Breast epithelium (tissue), 4 donors: ENCODE measurements at regions of chr4 and their contacts with region 1.

Region 1: DNA sequence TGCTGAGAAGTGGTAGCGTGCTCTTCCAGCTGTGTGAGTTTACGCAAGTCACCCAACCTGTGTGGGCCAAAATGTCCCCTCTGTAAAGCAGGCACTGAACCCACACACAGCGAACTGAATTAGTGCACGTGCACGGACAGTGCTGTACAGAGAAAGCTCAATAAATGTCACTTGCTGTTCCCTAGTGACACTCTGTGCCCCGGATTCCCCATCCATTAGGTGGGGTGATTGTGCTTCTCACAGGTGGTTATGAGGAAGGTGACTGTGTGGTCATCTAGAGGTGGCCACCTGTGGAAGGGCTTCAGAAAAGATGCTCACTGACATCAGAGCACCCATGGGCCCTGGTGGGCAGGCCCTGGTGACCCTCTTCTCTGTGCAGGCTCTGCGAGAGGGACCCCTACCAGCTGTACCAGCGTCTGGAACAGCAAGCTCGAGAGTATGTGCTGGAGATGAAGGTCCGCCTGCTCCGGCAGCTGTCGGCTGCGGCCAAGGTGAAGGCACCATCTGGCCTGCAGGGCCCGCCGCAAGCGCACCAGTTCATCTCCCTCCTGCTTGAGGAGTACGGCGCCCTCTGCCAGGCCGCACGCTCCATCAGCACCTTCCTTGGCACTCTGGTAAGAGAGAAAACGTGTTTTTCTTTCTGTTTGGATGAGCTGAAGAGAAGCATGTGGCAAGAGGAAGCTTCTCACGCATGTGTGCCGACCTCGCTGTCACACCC is 94.3 kb downstream of the FAM193A start:
- DNase-seq: peak in 1 of 2 donors; percentile 33
- H3K4me3 ChIP-seq: no peak overlapping the region
- H3K27ac ChIP-seq: no peak overlapping the region
- H3K4me1 ChIP-seq: no peaks in the 10 kb centered on the region
- H3K27me3 ChIP-seq: no peaks in the 10 kb centered on the region
- CTCF ChIP-seq: no peak
- POLR2A ChIP-seq: no peak

Region 2: DNA sequence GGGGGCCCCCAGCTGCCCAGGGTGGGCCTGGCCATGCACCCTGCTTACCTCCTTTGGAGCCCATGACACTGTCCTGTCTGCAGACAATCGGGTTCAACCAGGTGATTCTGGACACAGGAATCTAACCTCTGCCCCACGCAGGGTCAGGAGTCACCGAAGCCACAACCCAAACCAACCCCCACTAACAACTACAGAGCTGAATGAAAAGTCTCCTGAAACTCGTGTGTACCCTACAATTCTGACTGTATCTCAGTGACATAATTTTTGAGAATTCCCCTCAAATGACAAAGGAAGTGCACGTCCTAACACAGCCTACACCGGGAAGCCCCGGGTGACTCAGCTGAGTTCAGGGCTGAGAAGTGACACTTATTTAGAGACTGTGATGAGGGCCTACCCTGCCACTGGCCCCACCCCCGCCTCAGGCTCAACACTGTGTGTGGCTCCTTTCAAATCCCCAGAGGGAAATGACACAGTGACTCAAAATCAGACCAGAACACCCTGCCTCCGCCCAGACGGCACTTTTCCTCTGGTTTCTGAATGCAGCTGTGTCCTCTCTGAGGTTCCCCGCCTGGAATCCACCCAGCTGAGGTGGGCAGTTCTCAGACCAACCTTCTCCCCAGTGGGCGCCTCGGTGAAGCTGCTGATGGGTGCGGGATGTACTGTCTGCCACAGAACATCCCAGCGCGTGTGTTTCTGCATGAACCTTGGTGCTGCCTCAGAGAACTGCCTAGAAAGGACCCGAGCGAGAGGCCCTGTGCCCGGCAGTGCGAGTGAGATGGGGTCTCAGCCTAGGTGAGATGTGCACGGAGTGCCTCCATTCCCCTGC is 115.5 kb after region 1 on chr4:
- intact Hi-C with region 1: loop called (anchors 5 kb)
- DNase-seq: no peak
- H3K4me3 ChIP-seq: no peak overlapping the region
- H3K27ac ChIP-seq: peak overlapping the region in 1 of 2 donors; percentile 61
- H3K4me1 ChIP-seq: no peaks in the 10 kb centered on the region
- H3K27me3 ChIP-seq: no peaks in the 10 kb centered on the region
- CTCF ChIP-seq: no peak
- POLR2A ChIP-seq: no peak